ENCODE measurements at regions of chr10 and their contacts with region 1.

Region 1: DNA sequence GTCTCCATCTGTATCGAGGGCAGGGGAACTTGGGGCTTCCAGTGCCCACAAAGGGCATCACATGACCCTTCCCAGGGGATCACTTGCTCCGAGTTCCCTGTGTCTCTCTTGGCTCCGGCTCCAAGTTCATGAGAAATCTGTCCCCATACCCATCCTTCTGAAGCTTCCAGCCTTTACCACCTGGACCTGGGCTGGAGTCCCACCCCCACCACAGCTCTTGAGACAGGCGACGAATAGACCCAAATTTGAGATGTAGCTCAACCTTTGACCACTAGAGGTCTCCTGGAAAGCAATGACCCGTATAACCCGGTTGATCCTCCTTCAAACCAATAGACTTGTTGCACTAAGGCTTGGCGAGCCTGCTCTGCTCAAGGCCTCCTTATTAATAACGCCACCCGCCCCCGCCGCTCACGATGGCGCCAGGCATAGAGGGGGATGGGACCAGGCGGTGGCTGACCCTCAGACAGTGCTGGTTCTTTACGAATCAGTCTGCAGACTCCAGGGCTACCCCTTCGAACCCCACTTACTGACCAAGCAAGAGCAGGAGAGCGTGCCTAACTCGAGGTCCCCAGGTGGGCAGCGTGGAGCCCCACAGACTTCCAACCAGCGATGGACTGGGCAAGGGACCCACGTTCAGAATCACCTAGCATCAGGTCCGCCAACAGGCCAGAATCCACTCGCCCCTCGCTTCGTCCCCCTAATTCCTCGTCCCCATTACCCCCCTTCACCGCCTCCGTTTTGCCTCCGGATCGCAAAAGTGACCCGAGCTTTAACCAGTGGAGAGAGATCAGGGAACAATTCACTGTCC is 4.4 kb upstream of the ARID5B start:
- DNase-seq: peak; percentile 72
- H3K4me3 ChIP-seq: no peak overlapping the region
- H3K27ac ChIP-seq: peak overlapping the region; percentile 93
- H3K4me1 ChIP-seq: peaks cover 8% of the 10 kb centered on the region
- H3K27me3 ChIP-seq: no peaks in the 10 kb centered on the region
- CTCF ChIP-seq: peak; percentile 52

Region 2: GRCh38 chr10:61750929-61751471 is 146.1 kb before region 1 on chr10:
- intact Hi-C with region 1: loop called (anchors 5 kb)
- DNase-seq: peak; percentile 89
- H3K4me3 ChIP-seq: no peak overlapping the region
- H3K27ac ChIP-seq: peak overlapping the region; percentile 48
- H3K4me1 ChIP-seq: peaks cover 7% of the 10 kb centered on the region
- H3K27me3 ChIP-seq: no peaks in the 10 kb centered on the region
- CTCF ChIP-seq: peak; percentile 69

Region 3: DNA sequence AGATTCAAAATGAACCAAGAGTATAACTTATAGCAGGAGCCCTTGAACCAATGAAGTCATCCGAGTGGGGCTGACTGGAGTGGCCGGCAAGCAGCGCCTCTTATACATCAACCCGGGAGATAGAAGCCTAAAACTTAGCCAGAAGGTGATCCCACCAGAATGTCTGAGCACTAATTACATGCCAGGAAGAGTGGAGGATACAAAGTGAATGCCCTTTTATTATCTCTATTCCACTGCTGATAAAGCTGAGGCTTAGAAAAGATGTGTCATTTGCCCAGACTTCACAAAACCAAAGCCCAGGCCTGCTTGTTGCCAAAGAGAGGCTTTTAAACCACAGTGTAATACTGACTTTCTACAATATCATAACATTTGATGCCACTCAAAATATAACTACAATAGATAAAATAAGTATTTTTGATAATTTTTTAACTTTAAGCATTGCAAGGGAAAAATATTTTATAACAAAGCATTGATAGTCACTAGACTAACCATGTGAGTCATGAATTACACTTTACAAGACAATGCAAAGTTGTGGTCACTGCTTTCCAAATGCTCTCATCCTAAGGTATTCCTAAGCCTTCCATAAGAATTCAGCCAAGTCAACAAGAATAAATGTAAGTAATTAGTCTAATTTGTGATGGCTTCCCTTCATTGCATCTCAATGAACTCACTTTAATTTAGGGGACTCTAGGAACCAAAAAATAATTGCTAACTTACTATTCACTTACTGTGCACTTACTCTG is 54.1 kb before region 1 on chr10:
- intact Hi-C with region 1: loop called (anchors 5 kb)
- DNase-seq: no peak
- H3K4me3 ChIP-seq: no peak overlapping the region
- H3K27ac ChIP-seq: no peak overlapping the region
- H3K4me1 ChIP-seq: no peaks in the 10 kb centered on the region
- H3K27me3 ChIP-seq: no peaks in the 10 kb centered on the region
- CTCF ChIP-seq: no peak

Region 4: DNA sequence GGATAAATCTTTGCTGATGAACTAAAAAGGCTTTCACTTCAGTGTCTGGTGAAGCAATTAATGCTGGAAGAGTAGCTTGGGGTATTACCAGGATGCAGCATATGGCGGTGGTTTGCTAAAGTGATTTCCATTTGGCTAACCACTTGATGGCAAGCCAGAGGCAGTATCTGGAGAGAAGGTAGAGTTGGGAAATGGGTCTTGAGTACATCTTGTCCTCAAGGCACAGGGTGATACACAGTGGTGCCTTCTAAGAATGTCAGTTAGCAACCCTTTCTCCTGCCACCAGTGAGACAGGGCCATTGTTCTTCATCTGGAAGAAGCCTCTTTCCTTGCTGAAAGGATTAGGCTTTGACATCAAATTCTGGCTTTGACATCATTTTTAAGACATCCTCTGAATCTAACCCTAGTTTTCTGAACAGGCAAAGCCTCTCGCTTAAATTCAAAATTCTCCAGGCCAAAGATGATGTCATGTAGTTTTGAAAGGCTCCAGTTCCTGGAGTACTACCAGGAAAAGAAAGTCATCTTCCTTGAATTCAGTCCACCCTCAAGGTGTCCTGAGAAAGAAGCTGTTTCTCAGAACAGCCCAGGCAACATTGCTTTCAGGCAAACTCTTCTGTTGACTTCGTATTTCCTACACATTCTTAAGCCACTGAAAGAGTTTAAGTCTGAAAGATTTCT is 166.9 kb after region 1 on chr10:
- intact Hi-C with region 1: no loop called
- DNase-seq: no peak
- H3K4me3 ChIP-seq: no peak overlapping the region
- H3K27ac ChIP-seq: peak overlapping the region; percentile 12
- H3K4me1 ChIP-seq: no peaks in the 10 kb centered on the region
- H3K27me3 ChIP-seq: no peaks in the 10 kb centered on the region
- CTCF ChIP-seq: no peak

Measured in colonic mucosa (tissue), 4 donors.